Heart left ventricle (tissue), 16 donors: ENCODE measurements at regions of chr11 and their contacts with region 1.

Region 1: GRCh38 chr11:125345421-125346178 is 150.5 kb downstream of the FEZ1 start:
- DNase-seq: peak; percentile 73 to 85 (median 82)
- ATAC-seq: peak; percentile 68 to 86 (median 83)
- H3K4me3 ChIP-seq: no peak overlapping the region
- H3K27ac ChIP-seq: peak overlapping the region in 9 of 12 donors; percentile 11 to 74 (median 57)
- H3K4me1 ChIP-seq: peaks cover 0 to 39% (median 13%) of the 10 kb centered on the region in 12 donors
- H3K27me3 ChIP-seq: no peaks in the 10 kb centered on the region
- CTCF ChIP-seq: peak; percentile 78 to 94 (median 86)
- POLR2A ChIP-seq: no peak

Region 2: GRCh38 chr11:124953753-124954589 is 391.6 kb before region 1 on chr11 and contains the start of gene CCDC15:
- intact Hi-C with region 1: loop called in 3 of 10 experiments (anchors 5 to 10 kb)
- DNase-seq: peak; percentile 98 to 99 (median 98)
- ATAC-seq: peak; percentile 100
- H3K4me3 ChIP-seq: peak within 1 kb of the TSS; percentile 48 to 84 (median 74)
- H3K27ac ChIP-seq: peak within 1 kb of the TSS in 11 of 12 donors; percentile 63 to 90 (median 85)
- H3K4me1 ChIP-seq: peaks cover 0 to 15% (median 8%) of the 10 kb centered on the region in 12 donors
- H3K27me3 ChIP-seq: no peaks in the 10 kb centered on the region
- CTCF ChIP-seq: no peak
- POLR2A ChIP-seq: peak in 1 of 2 donors; percentile 78
- total RNA-seq, gene CCDC15: 0.12 to 1.8 (median 0.19) TPM

Region 3: DNA sequence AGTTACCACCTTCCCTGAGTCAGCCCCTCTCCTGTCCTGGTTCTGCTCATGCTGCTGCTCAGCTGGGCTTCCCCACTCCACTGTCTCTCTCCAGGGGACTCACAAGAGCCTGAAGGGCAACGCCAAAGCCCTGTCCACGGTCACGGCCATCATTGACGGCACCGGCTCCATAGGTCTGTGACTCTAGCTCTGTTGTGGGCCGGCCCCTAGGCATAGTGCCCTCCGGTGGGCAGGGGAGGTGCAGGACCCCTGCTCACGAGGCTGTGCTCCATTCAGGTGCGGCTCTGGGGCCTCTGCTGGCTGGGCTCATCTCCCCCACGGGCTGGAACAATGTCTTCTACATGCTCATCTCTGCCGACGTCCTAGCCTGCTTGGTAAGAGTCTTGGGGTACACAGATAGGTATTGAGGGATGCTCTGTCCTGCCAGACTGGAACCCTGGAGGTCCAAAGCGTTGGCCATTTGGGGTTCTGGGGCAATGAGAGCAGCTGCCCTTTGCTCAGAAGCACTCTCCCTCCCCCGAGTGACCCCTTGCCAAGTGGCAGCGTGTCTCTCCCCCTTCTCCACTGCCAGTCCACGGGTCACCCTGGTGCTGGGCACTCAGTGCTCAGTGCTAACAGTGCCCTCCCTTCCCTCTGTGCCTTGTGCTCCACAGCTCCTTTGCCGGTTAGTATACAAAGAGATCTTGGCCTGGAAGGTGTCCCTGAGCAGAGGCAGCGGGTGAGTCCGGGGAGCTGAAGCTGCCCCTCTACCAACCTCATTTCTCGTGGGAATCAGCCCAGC is 260.1 kb before region 1 on chr11:
- intact Hi-C with region 1: loop called in 8 of 10 experiments (anchors 2 to 5 kb)
- DNase-seq: no peak
- ATAC-seq: no peak
- H3K4me3 ChIP-seq: no peak overlapping the region
- H3K27ac ChIP-seq: no peak overlapping the region
- H3K4me1 ChIP-seq: no peaks in the 10 kb centered on the region
- H3K27me3 ChIP-seq: peaks cover 0 to 16% (median 0%) of the 10 kb centered on the region in 9 donors
- CTCF ChIP-seq: no peak
- POLR2A ChIP-seq: no peak

Region 4: DNA sequence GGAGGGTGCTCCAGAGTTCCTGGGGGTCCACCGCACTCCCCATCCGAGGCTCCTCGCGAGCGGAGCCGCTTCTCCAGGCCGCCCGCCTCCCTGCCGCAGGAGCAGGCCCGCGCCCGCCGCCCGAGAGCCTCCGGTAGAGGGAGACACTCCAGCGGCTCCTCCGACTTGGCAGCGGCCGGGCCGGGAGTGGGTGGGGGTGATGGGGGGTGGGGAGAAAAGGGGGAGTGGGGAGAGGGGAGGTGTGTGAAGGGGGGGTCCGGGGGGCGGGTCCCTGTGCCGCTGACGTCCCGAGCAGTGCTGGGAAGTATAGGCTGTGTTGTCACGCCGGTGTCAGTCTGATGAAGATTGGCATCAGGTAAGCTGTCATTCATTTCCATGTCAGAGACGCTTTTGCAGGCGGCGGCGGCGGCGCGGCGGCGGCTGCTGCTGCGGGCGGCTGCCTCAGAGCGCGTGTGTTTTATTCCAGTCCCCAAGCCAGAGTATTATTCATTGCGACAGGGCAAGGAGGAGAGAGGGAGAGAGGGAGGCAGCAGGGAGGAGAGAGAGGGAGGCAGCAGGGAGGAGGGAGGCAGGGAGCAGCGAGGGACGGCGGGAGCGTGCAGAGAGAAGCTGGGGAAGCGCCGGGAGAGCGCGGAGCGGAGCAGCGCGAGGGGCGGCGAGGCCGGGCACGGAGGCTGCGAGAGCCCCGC is 181.0 kb before region 1 on chr11 and contains the start of gene PKNOX2:
- intact Hi-C with region 1: loop called (anchors 2 to 5 kb)
- DNase-seq: peak; percentile 78 to 91 (median 84)
- ATAC-seq: peak; percentile 23 to 85 (median 82)
- H3K4me3 ChIP-seq: peak within 1 kb of the TSS; percentile 54 to 86 (median 68)
- H3K27ac ChIP-seq: peak within 1 kb of the TSS; percentile 35 to 86 (median 80)
- H3K4me1 ChIP-seq: peaks cover 0 to 47% (median 24%) of the 10 kb centered on the region in 12 donors
- H3K27me3 ChIP-seq: peaks cover 0 to 48% (median 2%) of the 10 kb centered on the region in 9 donors
- CTCF ChIP-seq: peak; percentile 37 to 84 (median 62)
- POLR2A ChIP-seq: peak in 1 of 2 donors; percentile 38
- total RNA-seq, gene PKNOX2: 3.1 to 9.4 (median 5.0) TPM

Region 5: DNA sequence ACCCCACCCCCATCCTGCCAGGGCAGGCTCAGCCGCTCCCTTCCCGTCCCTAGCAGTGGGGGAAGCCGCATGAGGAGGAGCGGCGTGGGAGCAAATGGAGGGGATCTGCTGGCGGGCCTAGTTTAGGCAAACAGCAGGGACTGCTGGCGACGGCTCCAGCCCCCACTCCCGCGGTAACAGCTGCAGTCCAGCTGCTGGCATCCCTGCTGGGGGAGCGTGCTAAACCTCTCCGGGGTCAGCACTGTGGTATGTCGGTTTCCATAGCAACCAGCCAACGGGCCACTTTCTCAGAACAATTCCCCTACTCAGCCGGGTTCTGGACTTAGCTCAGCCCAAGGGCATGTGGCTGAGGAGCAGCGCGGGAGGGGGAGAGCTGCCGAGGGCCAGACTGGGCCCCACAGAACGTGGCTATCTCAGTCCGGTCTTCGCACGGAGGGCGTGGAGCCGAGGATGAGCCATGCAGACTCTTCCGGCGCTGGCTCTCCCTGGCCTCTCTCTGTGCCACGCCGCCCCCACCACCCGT is 82.3 kb before region 1 on chr11:
- intact Hi-C with region 1: loop called in 3 of 10 experiments (anchors 5 to 10 kb)
- DNase-seq: peak; percentile 85 to 92 (median 89)
- ATAC-seq: peak; percentile 68 to 89 (median 88)
- H3K4me3 ChIP-seq: peak overlapping the region in 6 of 12 donors; percentile 8 to 27 (median 14)
- H3K27ac ChIP-seq: peak overlapping the region in 11 of 12 donors; percentile 13 to 78 (median 47)
- H3K4me1 ChIP-seq: peaks cover 0 to 50% (median 18%) of the 10 kb centered on the region in 12 donors
- H3K27me3 ChIP-seq: peaks cover 0 to 19% (median 0%) of the 10 kb centered on the region in 9 donors
- CTCF ChIP-seq: no peak
- POLR2A ChIP-seq: no peak

Region 6: GRCh38 chr11:125300791-125301218 is 44.8 kb before region 1 on chr11:
- intact Hi-C with region 1: no loop called
- DNase-seq: peak in 2 of 5 donors; percentile 55 to 70
- ATAC-seq: peak in 3 of 4 donors; percentile 47 to 76 (median 64)
- H3K4me3 ChIP-seq: no peak overlapping the region
- H3K27ac ChIP-seq: no peak overlapping the region
- H3K4me1 ChIP-seq: peaks cover 0 to 13% (median 7%) of the 10 kb centered on the region in 12 donors
- H3K27me3 ChIP-seq: no peaks in the 10 kb centered on the region
- CTCF ChIP-seq: no peak
- POLR2A ChIP-seq: no peak

Region 7: GRCh38 chr11:125382314-125382791 is 36.8 kb after region 1 on chr11:
- intact Hi-C with region 1: no loop called
- DNase-seq: peak in 1 of 5 donors; percentile 1
- ATAC-seq: no peak
- H3K4me3 ChIP-seq: no peak overlapping the region
- H3K27ac ChIP-seq: no peak overlapping the region
- H3K4me1 ChIP-seq: peaks cover 0 to 6% (median 0%) of the 10 kb centered on the region in 12 donors
- H3K27me3 ChIP-seq: no peaks in the 10 kb centered on the region
- CTCF ChIP-seq: no peak
- POLR2A ChIP-seq: no peak